Esophagus squamous epithelium (tissue), 5 donors: ENCODE measurements at regions of chr1 and their contacts with region 1.

Region 1: DNA sequence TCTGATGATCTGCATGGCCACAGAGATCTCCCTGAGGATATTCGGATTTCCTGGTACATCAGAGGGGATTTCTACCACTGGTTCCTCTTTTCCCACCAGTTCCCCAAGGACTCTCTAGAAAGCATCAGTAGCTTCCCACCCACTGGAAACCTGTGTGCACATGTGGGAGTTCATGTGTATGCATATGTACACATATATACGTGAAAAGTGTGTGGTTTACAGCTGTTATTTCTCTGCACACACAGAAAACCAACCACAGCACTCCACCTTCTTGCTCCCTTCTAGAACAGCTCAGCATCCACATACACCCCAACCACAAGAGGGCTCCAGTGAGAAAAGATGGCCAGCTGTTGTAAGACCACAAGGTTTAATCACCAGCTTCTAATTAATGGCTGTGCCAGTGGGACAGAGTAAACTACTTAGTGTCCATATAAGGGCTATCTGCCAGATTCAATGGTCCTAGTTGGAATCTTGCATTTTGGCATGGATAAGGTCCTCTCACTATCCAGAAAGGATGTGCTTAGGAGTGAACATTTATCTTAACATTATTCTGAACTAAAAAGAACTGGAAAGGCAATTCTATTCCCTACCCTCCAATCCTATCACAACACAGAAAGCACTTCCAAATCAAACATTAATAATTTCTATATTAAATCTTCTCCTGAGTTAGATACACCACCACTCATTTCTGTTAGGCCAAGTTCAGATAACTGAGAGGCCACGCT is 24.1 kb downstream of the GPR3 start:
- DNase-seq: no peak
- H3K4me3 ChIP-seq: no peak overlapping the region
- H3K27ac ChIP-seq: peak overlapping the region in 3 of 4 donors; percentile 23 to 86 (median 84)
- H3K4me1 ChIP-seq: peaks cover 13 to 95% (median 43%) of the 10 kb centered on the region in 3 donors
- H3K27me3 ChIP-seq: no peaks in the 10 kb centered on the region
- CTCF ChIP-seq: peak; percentile 4 to 73 (median 67)
- POLR2A ChIP-seq: no peak

Region 2: GRCh38 chr1:27044613-27045151 is 371.9 kb before region 1 on chr1:
- intact Hi-C with region 1: no loop called
- DNase-seq: no peak
- H3K4me3 ChIP-seq: peak overlapping the region in 2 of 4 donors; percentile 21 to 46
- H3K27ac ChIP-seq: no peak overlapping the region
- H3K4me1 ChIP-seq: peaks cover 0 to 21% (median 5%) of the 10 kb centered on the region in 3 donors
- H3K27me3 ChIP-seq: no peaks in the 10 kb centered on the region
- CTCF ChIP-seq: peak; percentile 97 to 99 (median 99)
- POLR2A ChIP-seq: no peak

Region 3: DNA sequence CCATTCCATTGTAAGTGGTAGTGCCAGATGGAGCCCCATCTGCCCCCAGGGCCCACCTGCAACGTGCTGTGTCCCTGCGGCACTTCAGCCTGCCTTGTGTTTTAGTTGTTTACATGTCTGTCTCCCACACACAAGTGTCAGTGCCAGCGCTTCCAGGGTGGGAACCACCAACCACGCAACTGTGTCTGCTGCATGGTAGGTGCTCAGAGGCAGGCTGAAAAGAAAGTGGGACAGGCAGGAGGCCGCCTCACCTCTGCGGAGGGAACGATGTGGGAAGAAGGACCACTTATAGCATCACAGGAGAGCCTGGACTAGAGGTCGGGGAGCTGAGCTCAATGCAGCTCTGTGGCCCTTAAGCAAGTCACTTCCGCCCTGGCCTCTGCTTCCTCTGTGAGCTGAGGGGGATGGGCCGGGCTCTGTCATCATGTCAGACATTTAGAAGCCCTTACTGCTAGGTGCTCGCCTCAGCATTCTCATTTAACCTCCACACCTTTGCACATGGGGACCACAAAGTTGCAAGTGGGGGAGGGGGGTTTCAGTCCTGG is 279.5 kb before region 1 on chr1:
- intact Hi-C with region 1: no loop called
- DNase-seq: peak; percentile 63
- H3K4me3 ChIP-seq: peak overlapping the region in 1 of 4 donors; percentile 32
- H3K27ac ChIP-seq: peak overlapping the region; percentile 46 to 85 (median 62)
- H3K4me1 ChIP-seq: peaks cover 39 to 65% (median 46%) of the 10 kb centered on the region in 3 donors
- H3K27me3 ChIP-seq: no peaks in the 10 kb centered on the region
- CTCF ChIP-seq: no peak
- POLR2A ChIP-seq: no peak

Region 4: GRCh38 chr1:27489910-27490741 is 73.6 kb after region 1 on chr1 and contains the start of gene WASF2:
- intact Hi-C with region 1: loop called (anchors 10 kb)
- DNase-seq: peak; percentile 85
- H3K4me3 ChIP-seq: peak within 1 kb of the TSS; percentile 86 to 99 (median 96)
- H3K27ac ChIP-seq: peak within 1 kb of the TSS; percentile 100
- H3K4me1 ChIP-seq: peaks cover 20 to 61% (median 34%) of the 10 kb centered on the region in 3 donors
- H3K27me3 ChIP-seq: no peaks in the 10 kb centered on the region
- CTCF ChIP-seq: no peak
- POLR2A ChIP-seq: peak in 3 of 4 donors; percentile 95 to 99 (median 99)
- total RNA-seq, gene WASF2: 53.7 to 92.8 (median 79.8) TPM

Region 5: GRCh38 chr1:27574871-27575831 is 158.6 kb after region 1 on chr1:
- intact Hi-C with region 1: no loop called
- DNase-seq: no peak
- H3K4me3 ChIP-seq: peak overlapping the region; percentile 24 to 74 (median 44)
- H3K27ac ChIP-seq: peak overlapping the region; percentile 55 to 97 (median 96)
- H3K4me1 ChIP-seq: peaks cover 74 to 100% (median 83%) of the 10 kb centered on the region in 3 donors
- H3K27me3 ChIP-seq: no peaks in the 10 kb centered on the region
- CTCF ChIP-seq: peak in 1 of 6 experiments; percentile 2
- POLR2A ChIP-seq: no peak

Region 6: DNA sequence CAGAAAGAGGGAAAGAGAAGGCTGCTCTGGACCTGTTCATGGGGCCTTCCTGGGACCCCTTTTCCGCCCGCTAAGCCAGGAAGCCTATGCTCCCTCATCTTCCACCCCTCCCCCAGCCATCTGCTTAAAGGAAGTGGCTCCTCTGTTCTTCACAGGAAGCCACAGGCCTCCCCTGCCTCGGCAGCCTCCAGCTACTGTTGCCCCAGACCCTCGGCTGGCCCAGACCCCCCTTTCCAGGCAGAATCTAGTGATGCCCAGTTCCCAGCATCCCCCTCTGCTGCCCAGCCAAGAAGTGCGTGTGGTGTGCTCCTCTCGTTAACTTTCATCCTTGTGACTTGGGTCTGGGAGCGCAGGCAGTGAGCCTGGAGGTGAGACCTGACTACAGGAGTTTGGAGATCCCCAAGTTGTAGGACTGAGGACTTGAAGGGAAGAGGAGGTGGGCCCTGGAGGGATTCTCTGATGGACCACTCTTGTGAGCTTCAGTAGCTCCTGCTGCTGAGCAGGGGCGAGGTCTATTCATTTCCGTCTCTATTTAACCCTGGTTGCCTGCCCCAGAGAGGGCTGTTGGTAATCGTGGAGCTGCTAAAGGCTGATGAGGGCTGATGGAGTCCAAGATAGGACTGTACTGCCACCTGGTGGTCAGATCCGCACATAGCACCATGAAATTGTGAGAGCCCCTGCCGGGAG is 246.3 kb after region 1 on chr1:
- intact Hi-C with region 1: no loop called
- DNase-seq: no peak
- H3K4me3 ChIP-seq: no peak overlapping the region
- H3K27ac ChIP-seq: peak overlapping the region; percentile 53 to 81 (median 62)
- H3K4me1 ChIP-seq: peaks cover 30 to 56% (median 36%) of the 10 kb centered on the region in 3 donors
- H3K27me3 ChIP-seq: no peaks in the 10 kb centered on the region
- CTCF ChIP-seq: peak; percentile 57 to 99 (median 97)
- POLR2A ChIP-seq: no peak